CD14-positive monocyte (primary cell): ENCODE measurements at regions of chr19 and their contacts with region 1.

Region 1: DNA sequence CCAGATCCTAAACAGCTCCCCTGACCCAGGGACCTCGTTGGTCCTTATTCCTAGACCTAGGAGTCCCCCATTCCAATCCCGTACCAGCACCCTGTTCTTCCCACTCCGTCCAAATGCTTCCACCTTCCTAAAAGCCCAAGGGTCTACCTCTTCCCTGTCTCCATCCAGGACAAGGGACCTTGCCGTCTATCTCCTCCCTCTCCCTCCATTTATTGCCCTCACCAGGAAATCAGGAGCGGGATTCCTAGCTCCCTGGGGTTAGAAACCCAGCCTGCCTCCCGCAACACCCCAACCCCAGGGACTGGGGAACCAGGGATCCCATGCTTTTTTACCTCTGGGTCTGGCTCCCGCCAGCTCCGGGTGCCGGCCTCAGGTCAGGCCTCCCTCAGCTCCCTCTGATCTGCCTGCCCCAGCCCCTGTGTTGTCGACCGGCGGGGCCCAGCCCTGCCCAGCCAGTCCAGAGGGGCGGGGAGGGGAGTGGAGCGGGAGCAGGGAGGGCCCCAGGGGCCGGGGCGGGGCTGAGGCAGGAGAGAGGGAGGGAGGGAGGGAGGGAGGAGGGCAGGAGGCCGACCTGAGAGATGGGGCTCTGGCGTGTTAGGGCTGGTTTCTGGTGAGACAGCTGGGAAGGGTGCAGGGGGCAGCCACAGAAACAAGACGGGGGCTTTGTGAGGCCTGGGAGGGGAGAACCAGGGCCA is at the start of gene B3GNT8:
- DNase-seq: peak; percentile 35 to 62 (median 36)
- H3K4me3 ChIP-seq: peak within 1 kb of the TSS; percentile 61 to 85 (median 75)
- H3K4me3 Mint-ChIP-seq: peak within 1 kb of the TSS; percentile 94 to 98
- H3K27ac ChIP-seq: peak within 1 kb of the TSS; percentile 73 to 77
- H3K27ac Mint-ChIP-seq: peak within 1 kb of the TSS; percentile 87 to 97 (median 91)
- H3K4me1 ChIP-seq: peaks cover 71 to 80% of the 10 kb centered on the region in 2 donors
- H3K4me1 Mint-ChIP-seq: peaks cover 64% of the 10 kb centered on the region
- H3K27me3 ChIP-seq: no peaks in the 10 kb centered on the region
- H3K27me3 Mint-ChIP-seq: peaks cover 0 to 1% (median 0%) of the 10 kb centered on the region in 3 donors
- CTCF ChIP-seq: no peak
- polyA plus RNA-seq, gene B3GNT8: 2.9 to 18.9 (median 17.4) TPM

Region 2: DNA sequence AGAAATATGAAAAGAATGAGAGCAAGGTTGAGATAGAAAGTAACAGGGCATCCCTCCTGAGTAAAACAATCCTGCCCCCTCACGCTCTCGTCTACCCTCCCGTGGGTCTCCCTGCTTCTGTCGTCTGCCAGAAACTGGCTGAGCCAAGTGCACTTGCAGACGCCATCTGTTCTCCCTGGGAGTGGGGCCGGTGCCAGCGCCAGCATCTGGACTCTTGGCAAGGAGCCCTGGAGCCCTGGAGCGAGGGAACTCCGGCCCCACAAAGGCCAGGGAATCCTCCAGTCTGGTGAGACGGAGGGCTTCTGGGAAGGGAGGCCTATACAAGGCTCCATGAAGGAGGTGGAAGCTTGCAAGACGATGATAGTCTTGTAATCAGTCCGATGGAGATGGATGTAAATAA is 53.1 kb before region 1 on chr19:
- intact Hi-C with region 1: loop called in 1 of 2 experiments (anchors 10 kb)
- DNase-seq: no peak
- H3K4me3 ChIP-seq: no peak overlapping the region
- H3K4me3 Mint-ChIP-seq: no peak overlapping the region
- H3K27ac ChIP-seq: no peak overlapping the region
- H3K27ac Mint-ChIP-seq: peak overlapping the region in 1 of 7 donors; percentile 50
- H3K4me1 ChIP-seq: peaks cover 37 to 41% of the 10 kb centered on the region in 2 donors
- H3K4me1 Mint-ChIP-seq: peaks cover 37% of the 10 kb centered on the region
- H3K27me3 ChIP-seq: no peaks in the 10 kb centered on the region
- H3K27me3 Mint-ChIP-seq: peaks cover 0 to 2% (median 0%) of the 10 kb centered on the region in 3 donors
- CTCF ChIP-seq: no peak

Region 3: GRCh38 chr19:41397086-41398049 is 29.7 kb before region 1 on chr19 and contains the starts of genes BCKDHA and EXOSC5:
- intact Hi-C with region 1: loop called in 1 of 2 experiments (anchors 5 kb)
- DNase-seq: peak; percentile 100
- H3K4me3 ChIP-seq: peak within 1 kb of the TSS; percentile 87 to 95 (median 95)
- H3K4me3 Mint-ChIP-seq: peak within 1 kb of the TSS; percentile 97
- H3K27ac ChIP-seq: peak within 1 kb of the TSS; percentile 80 to 97
- H3K27ac Mint-ChIP-seq: peak within 1 kb of the TSS; percentile 98 to 100 (median 99)
- H3K4me1 ChIP-seq: peaks cover 29 to 30% of the 10 kb centered on the region in 2 donors
- H3K4me1 Mint-ChIP-seq: peaks cover 42% of the 10 kb centered on the region
- H3K27me3 ChIP-seq: no peaks in the 10 kb centered on the region
- H3K27me3 Mint-ChIP-seq: no peaks in the 10 kb centered on the region
- CTCF ChIP-seq: no peak
- polyA plus RNA-seq, gene BCKDHA: 52.4 to 90.1 (median 87.6) TPM
- polyA plus RNA-seq, gene EXOSC5: 24.0 to 58.7 (median 40.5) TPM